ENCODE measurements at regions of chr12 and their contacts with region 1.

Region 1: DNA sequence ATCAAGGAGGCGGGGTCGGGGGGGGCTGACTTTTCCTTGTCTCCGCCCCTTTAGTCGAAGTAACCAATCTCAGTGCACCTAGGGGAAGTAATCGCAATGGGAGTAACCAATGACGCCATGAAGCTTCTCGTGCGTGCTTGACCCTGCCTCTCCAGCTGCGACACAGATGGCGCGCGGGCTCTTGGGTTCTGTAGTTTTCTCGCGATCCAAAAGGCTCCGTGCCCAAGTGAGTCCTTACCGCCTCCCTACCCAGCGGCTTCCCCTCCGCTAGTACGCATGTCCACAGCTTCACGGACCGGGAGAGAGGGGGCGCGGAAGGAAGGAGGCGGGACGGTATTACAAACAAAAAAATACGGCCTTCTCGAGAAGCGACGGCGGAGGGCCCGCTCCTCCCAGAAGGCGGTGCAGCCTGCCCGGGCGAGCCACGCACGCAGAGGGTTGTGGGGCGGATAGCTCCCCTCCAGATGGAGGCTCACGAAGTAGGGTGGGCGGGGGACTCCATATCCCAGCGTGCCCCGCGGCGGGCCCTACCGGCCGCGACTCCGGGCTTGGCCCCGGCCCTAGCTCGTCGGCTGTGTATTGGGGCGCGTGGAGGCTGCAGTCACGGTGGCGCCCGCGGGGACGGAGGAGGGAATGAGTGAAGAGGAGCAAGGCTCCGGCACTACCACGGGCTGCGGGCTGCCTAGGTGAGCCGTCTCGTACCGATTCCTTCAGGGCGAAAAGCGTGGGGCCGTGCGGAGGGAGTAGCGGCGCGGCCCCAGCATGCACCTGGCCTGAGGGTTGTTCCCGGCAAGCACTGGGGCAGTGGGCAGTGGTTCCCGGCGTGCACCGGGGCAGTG is at the start of gene TARBP2:
- DNase-seq: peak; percentile 99
- H3K4me3 Mint-ChIP-seq: peak within 1 kb of the TSS; percentile 80
- H3K27ac Mint-ChIP-seq: peak within 1 kb of the TSS; percentile 93
- H3K4me1 Mint-ChIP-seq: peaks cover 36% of the 10 kb centered on the region
- H3K27me3 Mint-ChIP-seq: no peaks in the 10 kb centered on the region
- CTCF ChIP-seq: no peak
- total RNA-seq, gene TARBP2: 26.4 and 27.8 TPM in 2 replicates

Region 2: GRCh38 chr12:53190108-53190729 is 310.8 kb before region 1 on chr12:
- CTCF ChIA-PET with region 1: no interaction called
- POLR2A ChIA-PET with region 1: no interaction called
- intact Hi-C with region 1: no loop called
- DNase-seq: peak; percentile 68
- H3K4me3 Mint-ChIP-seq: no peak overlapping the region
- H3K27ac Mint-ChIP-seq: no peak overlapping the region
- H3K4me1 Mint-ChIP-seq: peaks cover 2% of the 10 kb centered on the region
- H3K27me3 Mint-ChIP-seq: no peaks in the 10 kb centered on the region
- CTCF ChIP-seq: peak; percentile 72

Region 3: DNA sequence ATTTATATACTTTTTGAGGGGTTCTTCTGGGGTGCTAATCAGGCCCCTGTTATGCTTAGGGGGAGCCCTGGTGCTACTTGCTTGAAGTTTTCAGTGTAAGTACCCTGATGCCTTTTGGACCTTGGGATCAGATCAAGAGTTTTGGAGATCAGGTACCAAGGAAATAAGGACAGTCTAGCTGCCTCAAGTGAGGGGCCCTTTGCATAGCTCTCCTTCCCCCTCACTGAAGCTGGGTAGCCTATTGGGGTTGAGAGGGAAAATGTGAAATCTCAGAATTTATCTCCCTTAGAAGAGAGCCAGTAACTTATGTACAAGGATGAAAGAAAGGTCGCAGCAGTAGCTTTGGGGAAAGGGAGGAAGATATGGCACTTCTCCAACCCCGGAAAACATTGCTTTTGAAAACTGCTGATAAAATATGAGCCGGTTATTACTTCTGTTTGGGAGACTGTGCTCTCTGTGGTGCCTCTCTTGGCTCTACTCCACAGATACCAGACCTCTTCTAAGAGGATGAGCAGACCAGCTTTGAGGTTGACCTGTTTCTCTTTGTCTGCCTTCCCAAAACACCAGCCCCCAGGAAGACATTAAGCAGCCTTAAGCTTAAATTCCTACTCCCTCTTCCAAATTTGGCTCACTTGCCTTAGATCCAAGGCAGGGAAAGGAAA is 86.1 kb before region 1 on chr12:
- CTCF ChIA-PET with region 1: no interaction called
- POLR2A ChIA-PET with region 1: no interaction called
- intact Hi-C with region 1: loop called (anchors 2 kb)
- DNase-seq: no peak
- H3K4me3 Mint-ChIP-seq: no peak overlapping the region
- H3K27ac Mint-ChIP-seq: no peak overlapping the region
- H3K4me1 Mint-ChIP-seq: peaks cover 8% of the 10 kb centered on the region
- H3K27me3 Mint-ChIP-seq: no peaks in the 10 kb centered on the region
- CTCF ChIP-seq: no peak

Region 4: GRCh38 chr12:53451661-53452158 is 49.3 kb before region 1 on chr12 and contains the start of gene PCBP2:
- CTCF ChIA-PET with region 1: interaction called, 3 read pairs
- POLR2A ChIA-PET with region 1: interaction called, 22 read pairs
- intact Hi-C with region 1: loop called (anchors 2 kb)
- DNase-seq: peak; percentile 99
- H3K4me3 Mint-ChIP-seq: peak within 1 kb of the TSS; percentile 92
- H3K27ac Mint-ChIP-seq: peak within 1 kb of the TSS; percentile 100
- H3K4me1 Mint-ChIP-seq: peaks cover 30% of the 10 kb centered on the region
- H3K27me3 Mint-ChIP-seq: no peaks in the 10 kb centered on the region
- CTCF ChIP-seq: peak; percentile 56
- total RNA-seq, gene PCBP2: 994 and 1,037 TPM in 2 replicates

Region 5: DNA sequence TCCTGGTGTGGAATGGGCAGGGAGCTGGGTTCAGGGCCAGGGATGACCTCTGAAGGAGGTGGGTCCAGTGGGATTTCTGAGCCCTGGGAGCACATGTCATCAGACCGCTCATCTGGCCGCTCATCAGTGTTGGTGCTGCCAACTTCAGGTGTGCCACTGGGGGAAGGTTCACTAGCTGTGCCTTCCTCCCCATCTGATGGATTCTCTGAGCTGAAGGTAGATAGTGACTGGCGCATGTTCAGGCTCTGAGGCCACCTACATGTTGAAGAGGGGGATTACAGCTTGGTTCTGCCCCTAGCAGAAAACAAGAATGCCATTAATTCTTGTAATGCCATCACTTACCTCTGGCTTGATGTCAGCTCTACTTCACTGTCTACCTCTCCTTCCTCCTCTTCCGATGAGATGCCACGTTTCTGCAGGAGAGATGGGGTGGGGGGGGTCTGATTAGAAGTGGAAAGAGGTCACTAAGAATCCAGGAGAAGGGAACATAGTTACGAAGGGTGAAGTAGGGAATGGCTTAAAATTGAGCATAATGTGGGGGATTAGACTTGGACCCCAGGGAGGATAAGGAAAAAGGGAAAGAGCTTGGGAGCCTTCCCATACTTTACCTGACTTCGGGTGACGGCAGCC is 18.9 kb before region 1 on chr12:
- CTCF ChIA-PET with region 1: interaction called, 3 read pairs
- POLR2A ChIA-PET with region 1: interaction called, 53 read pairs
- intact Hi-C with region 1: no loop called
- DNase-seq: no peak
- H3K4me3 Mint-ChIP-seq: no peak overlapping the region
- H3K27ac Mint-ChIP-seq: no peak overlapping the region
- H3K4me1 Mint-ChIP-seq: peaks cover 6% of the 10 kb centered on the region
- H3K27me3 Mint-ChIP-seq: no peaks in the 10 kb centered on the region
- CTCF ChIP-seq: no peak

Region 6: DNA sequence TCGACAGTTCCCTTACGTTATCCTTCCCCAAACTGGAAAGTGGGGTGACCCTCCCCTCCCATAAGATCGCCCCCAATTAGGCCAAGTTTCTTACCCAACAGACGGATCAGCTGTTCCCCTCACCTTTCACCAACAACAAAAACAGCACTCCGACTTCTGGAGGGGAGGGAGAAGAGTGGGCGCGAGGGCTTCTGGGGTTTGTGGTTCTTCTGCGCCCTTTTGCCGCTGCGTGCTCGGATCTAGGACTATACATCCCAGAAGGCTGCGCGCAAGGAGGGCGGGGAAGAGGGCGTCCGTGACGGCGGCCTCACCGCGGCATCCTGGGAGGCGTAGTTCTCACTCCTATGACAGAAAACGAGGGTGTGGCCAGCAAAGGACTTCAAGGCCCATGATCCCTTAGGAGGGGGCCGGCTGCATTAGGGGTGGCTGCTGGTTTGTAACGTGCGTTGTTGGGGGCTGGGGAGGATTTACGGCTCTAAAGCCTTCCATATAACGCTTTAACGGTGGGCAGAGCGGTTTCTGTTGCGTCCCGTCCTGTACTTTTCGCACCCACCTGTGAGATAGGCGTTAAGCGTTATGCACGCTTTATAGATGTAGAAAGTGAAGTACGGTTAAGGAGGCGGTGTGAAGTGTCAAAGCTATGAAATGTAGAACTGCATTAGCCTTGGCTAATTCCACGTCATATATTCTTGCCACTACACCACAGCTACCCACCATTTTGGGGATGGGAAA is 226.5 kb after region 1 on chr12 and contains the start of gene CALCOCO1:
- CTCF ChIA-PET with region 1: no interaction called
- POLR2A ChIA-PET with region 1: interaction called, 13 read pairs
- intact Hi-C with region 1: no loop called
- DNase-seq: peak; percentile 98
- H3K4me3 Mint-ChIP-seq: peak within 1 kb of the TSS; percentile 95
- H3K27ac Mint-ChIP-seq: peak within 1 kb of the TSS; percentile 99
- H3K4me1 Mint-ChIP-seq: peaks cover 15% of the 10 kb centered on the region
- H3K27me3 Mint-ChIP-seq: no peaks in the 10 kb centered on the region
- CTCF ChIP-seq: no peak
- total RNA-seq, gene CALCOCO1: 49.4 and 74.6 TPM in 2 replicates